ENCODE measurements at regions of chr17 and their contacts with region 1.

Region 1: GRCh38 chr17:76726231-76726775 is at the start of gene JMJD6:
- DNase-seq: peak; percentile 86
- ATAC-seq: peak; percentile 85
- H3K4me3 ChIP-seq: peak within 1 kb of the TSS; percentile 97
- H3K27ac ChIP-seq: peak within 1 kb of the TSS; percentile 98
- H3K4me1 ChIP-seq: no peaks in the 10 kb centered on the region; the same call in 1 of the 2 replicates
- H3K27me3 ChIP-seq: no peaks in the 10 kb centered on the region
- CTCF ChIP-seq: no peak
- EP300 ChIP-seq: no peak
- POLR2A ChIP-seq: peak; percentile 82
- RAD21 ChIP-seq: no peak
- polyA plus RNA-seq, gene JMJD6: 1.2 to 6.5 TPM

Region 2: GRCh38 chr17:76351526-76352071 is 374.7 kb before region 1 on chr17:
- CTCF ChIA-PET with region 1: no interaction called
- POLR2A ChIA-PET with region 1: no interaction called
- RAD21 ChIA-PET with region 1: no interaction called
- SMC1A ChIA-PET with region 1: no interaction called
- in situ Hi-C with region 1: no loop called
- intact Hi-C with region 1: no loop called
- DNase-seq: no peak
- ATAC-seq: no peak
- H3K4me3 ChIP-seq: no peak overlapping the region
- H3K27ac ChIP-seq: no peak overlapping the region
- H3K4me1 ChIP-seq: peaks cover 4% of the 10 kb centered on the region
- H3K27me3 ChIP-seq: no peaks in the 10 kb centered on the region
- CTCF ChIP-seq: no peak
- EP300 ChIP-seq: no peak
- POLR2A ChIP-seq: no peak
- RAD21 ChIP-seq: no peak

Region 3: DNA sequence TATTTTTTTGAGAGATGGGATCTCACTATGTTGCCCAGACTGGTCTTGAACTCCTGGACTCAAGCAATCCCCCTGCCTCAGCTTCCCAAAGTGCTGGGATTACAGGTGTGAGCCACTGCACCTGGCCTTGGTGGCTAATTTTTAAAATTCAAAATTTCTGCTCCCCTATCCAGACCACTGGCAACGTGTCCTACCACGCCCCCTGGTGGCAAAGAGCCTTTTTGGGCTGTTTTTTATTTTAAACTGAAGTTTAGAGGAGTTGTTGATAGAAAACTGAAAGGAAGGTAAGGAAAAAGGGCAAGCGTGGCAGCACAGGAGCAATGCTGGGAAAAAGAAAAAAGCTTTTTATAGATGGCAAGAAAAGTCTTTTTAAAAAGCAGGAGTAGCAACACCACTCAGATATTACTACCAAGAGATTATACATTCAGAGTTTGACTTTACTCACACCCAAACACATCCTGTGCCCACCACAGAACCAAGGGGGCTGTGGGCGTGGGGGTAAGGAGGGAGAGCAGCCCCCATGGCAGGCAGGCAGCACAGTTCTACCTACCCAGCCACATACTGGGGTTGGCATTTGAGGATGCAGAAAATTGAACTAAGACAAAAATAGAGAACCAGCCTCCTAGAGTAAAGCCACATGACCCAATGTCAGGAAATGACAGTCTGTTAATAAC is 11.3 kb before region 1 on chr17:
- CTCF ChIA-PET with region 1: interaction called, 65 read pairs
- POLR2A ChIA-PET with region 1: interaction called, 8 read pairs
- RAD21 ChIA-PET with region 1: interaction called, 4 read pairs
- SMC1A ChIA-PET with region 1: interaction called, 3 read pairs
- in situ Hi-C with region 1: no loop called
- intact Hi-C with region 1: no loop called
- DNase-seq: no peak
- ATAC-seq: peak; percentile 71
- H3K4me3 ChIP-seq: no peak overlapping the region
- H3K27ac ChIP-seq: no peak overlapping the region
- H3K4me1 ChIP-seq: peaks cover 8% of the 10 kb centered on the region
- H3K27me3 ChIP-seq: no peaks in the 10 kb centered on the region; a peak in 1 of 4 replicates
- CTCF ChIP-seq: peak; percentile 68 to 77 (median 69)
- EP300 ChIP-seq: no peak
- POLR2A ChIP-seq: no peak
- RAD21 ChIP-seq: peak; percentile 71

Region 4: GRCh38 chr17:76737082-76737675 is 10.9 kb after region 1 on chr17 and contains the start of gene SRSF2:
- CTCF ChIA-PET with region 1: interaction called, 12 read pairs
- POLR2A ChIA-PET with region 1: interaction called, 60 read pairs
- RAD21 ChIA-PET with region 1: interaction called, 12 read pairs
- SMC1A ChIA-PET with region 1: interaction called, 10 read pairs
- in situ Hi-C with region 1: no loop called
- intact Hi-C with region 1: loop called (anchors 1 kb)
- DNase-seq: peak; percentile 87
- ATAC-seq: peak; percentile 80
- H3K4me3 ChIP-seq: peak within 1 kb of the TSS; percentile 92
- H3K27ac ChIP-seq: peak within 1 kb of the TSS; percentile 91
- H3K4me1 ChIP-seq: no peaks in the 10 kb centered on the region; the same call in none of the 2 replicates
- H3K27me3 ChIP-seq: no peaks in the 10 kb centered on the region
- CTCF ChIP-seq: no peak
- EP300 ChIP-seq: no peak
- POLR2A ChIP-seq: peak; percentile 96
- RAD21 ChIP-seq: no peak
- polyA plus RNA-seq, gene SRSF2: 225 to 363 TPM

Region 5: DNA sequence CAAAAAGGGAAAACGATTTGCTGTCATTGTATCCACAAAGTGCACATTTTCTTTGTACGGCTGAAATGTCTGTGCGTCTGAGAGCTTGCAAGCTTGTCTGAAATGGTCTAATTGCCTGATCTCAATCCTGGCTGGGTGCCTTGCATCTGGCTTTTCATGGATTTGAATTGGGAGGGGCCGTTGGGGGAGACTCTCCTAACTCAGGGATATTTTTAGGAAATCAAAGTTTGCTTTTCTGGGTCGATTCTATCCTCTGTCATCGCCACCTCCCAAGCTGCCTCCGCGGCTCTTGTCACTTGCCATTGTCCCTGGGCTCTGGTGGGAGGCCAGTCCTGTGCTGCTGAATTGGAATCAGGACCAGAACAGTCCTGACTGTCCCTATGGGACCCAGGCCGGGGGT is 108.6 kb after region 1 on chr17:
- CTCF ChIA-PET with region 1: interaction called, 4 read pairs
- POLR2A ChIA-PET with region 1: no interaction called
- RAD21 ChIA-PET with region 1: no interaction called
- SMC1A ChIA-PET with region 1: no interaction called
- in situ Hi-C with region 1: no loop called
- intact Hi-C with region 1: loop called (anchors 5 kb)
- DNase-seq: no peak
- ATAC-seq: no peak
- H3K4me3 ChIP-seq: no peak overlapping the region
- H3K27ac ChIP-seq: no peak overlapping the region
- H3K4me1 ChIP-seq: no peaks in the 10 kb centered on the region
- H3K27me3 ChIP-seq: no peaks in the 10 kb centered on the region; a peak in 2 of 4 replicates
- CTCF ChIP-seq: no peak
- EP300 ChIP-seq: no peak
- POLR2A ChIP-seq: no peak
- RAD21 ChIP-seq: no peak

Measured in GM12878 (cell line).